ENCODE measurements at regions of chr12 and their contacts with region 1.

Region 1: GRCh38 chr12:85626001-85626781 is 210.0 kb downstream of the RASSF9 start:
- DNase-seq: peak; percentile 95
- H3K4me3 ChIP-seq: no peak overlapping the region
- H3K27ac ChIP-seq: peak overlapping the region; percentile 92
- H3K4me1 ChIP-seq: peaks cover 26% of the 10 kb centered on the region
- H3K27me3 ChIP-seq: no peaks in the 10 kb centered on the region
- CTCF ChIP-seq: no peak
- POLR2A ChIP-seq: peak; percentile 73

Region 2: GRCh38 chr12:83796527-83796926 is 1829.7 kb before region 1 on chr12:
- CTCF ChIA-PET with region 1: no interaction called
- POLR2A ChIA-PET with region 1: no interaction called
- dilution Hi-C with region 1: no loop called
- intact Hi-C with region 1: no loop called
- DNase-seq: no peak
- H3K4me3 ChIP-seq: no peak overlapping the region
- H3K27ac ChIP-seq: no peak overlapping the region
- H3K4me1 ChIP-seq: no peaks in the 10 kb centered on the region
- H3K27me3 ChIP-seq: no peaks in the 10 kb centered on the region
- CTCF ChIP-seq: no peak
- POLR2A ChIP-seq: no peak

Region 3: GRCh38 chr12:85237320-85237719 is 388.9 kb before region 1 on chr12:
- CTCF ChIA-PET with region 1: no interaction called
- POLR2A ChIA-PET with region 1: no interaction called
- dilution Hi-C with region 1: no loop called
- intact Hi-C with region 1: no loop called
- DNase-seq: no peak
- H3K4me3 ChIP-seq: no peak overlapping the region
- H3K27ac ChIP-seq: no peak overlapping the region
- H3K4me1 ChIP-seq: no peaks in the 10 kb centered on the region
- H3K27me3 ChIP-seq: no peaks in the 10 kb centered on the region
- CTCF ChIP-seq: no peak
- POLR2A ChIP-seq: no peak

Region 4: GRCh38 chr12:85588221-85588620 is 38.0 kb before region 1 on chr12:
- CTCF ChIA-PET with region 1: interaction called, 3 read pairs
- POLR2A ChIA-PET with region 1: no interaction called
- dilution Hi-C with region 1: no loop called
- intact Hi-C with region 1: loop called (anchors 2 kb)
- DNase-seq: peak; percentile 88
- H3K4me3 ChIP-seq: no peak overlapping the region
- H3K27ac ChIP-seq: no peak overlapping the region
- H3K4me1 ChIP-seq: no peaks in the 10 kb centered on the region
- H3K27me3 ChIP-seq: no peaks in the 10 kb centered on the region
- CTCF ChIP-seq: no peak
- POLR2A ChIP-seq: no peak

Region 5: GRCh38 chr12:85720308-85721033 is 94.3 kb after region 1 on chr12:
- CTCF ChIA-PET with region 1: no interaction called
- POLR2A ChIA-PET with region 1: no interaction called
- dilution Hi-C with region 1: no loop called
- intact Hi-C with region 1: loop called (anchors 1 kb)
- DNase-seq: peak; percentile 59
- H3K4me3 ChIP-seq: no peak overlapping the region
- H3K27ac ChIP-seq: peak overlapping the region; percentile 66
- H3K4me1 ChIP-seq: peaks cover 17% of the 10 kb centered on the region
- H3K27me3 ChIP-seq: no peaks in the 10 kb centered on the region
- CTCF ChIP-seq: no peak
- POLR2A ChIP-seq: no peak

Region 6: DNA sequence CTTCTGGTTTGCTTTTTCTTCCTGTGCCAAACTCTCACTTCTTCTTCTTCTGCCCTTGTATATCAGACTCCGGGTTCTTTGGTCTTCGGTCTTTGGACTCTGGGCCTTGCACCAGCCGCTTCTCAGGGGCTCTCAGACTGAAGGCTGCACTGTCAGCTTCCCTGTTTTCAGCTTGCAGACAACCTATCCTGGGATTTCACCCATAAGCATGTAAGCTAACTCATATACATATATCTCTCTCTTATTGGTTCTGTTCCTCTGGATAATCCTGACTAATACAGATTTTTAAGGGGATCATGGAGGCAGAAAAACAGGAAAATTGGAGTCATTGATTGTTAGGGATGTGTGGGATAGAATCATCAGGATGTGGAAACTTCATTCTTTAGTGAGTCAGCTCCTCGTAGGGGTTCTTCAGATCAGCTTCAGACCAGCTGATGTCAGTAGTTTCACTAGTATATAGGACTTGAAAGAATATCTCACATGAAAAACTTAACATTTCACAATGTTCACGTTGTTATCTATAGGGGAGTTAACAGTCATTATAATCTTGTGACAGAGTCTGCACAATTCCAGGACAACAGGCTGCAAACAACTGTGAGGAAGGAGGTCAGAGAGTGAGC is 107.1 kb after region 1 on chr12:
- CTCF ChIA-PET with region 1: no interaction called
- POLR2A ChIA-PET with region 1: no interaction called
- dilution Hi-C with region 1: no loop called
- intact Hi-C with region 1: no loop called
- DNase-seq: peak; percentile 84
- H3K4me3 ChIP-seq: no peak overlapping the region
- H3K27ac ChIP-seq: no peak overlapping the region
- H3K4me1 ChIP-seq: no peaks in the 10 kb centered on the region
- H3K27me3 ChIP-seq: no peaks in the 10 kb centered on the region
- CTCF ChIP-seq: no peak
- POLR2A ChIP-seq: no peak

Region 7: DNA sequence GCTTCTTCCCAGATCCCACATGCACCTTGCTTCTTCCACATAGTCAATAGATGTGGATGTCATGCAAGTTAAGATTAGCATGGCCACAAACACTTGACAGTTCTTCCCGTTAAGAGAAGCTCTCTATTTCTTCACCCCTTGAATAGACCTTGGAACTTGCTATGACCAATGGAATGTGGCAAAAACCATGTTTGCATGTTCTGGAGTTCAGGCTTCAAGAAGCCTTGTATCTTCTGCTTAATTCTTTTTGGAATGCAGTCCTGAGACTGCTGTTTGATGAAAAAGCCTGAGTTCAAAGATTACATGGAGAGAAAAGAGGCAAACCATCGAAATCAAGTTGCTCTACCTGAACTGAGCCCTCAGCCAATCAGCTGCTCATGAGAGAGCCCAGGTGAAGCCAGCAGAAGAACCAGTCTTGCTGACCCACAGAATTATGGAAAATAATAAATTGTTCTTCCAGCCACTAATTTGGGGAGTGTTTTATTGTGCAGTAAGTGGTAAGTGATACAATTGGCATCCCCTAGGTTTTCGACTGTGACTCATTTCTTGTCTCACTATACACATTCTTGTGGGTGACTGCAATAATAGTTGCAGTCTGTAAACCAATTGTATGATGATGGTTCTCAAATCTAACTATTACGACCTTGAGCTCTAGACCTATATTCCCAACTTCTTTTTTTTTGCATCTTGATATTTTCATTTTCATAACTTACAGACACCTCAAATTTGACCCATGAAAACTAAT is 197.4 kb after region 1 on chr12:
- CTCF ChIA-PET with region 1: interaction called, 5 read pairs
- POLR2A ChIA-PET with region 1: no interaction called
- dilution Hi-C with region 1: no loop called
- intact Hi-C with region 1: loop called (anchors 1 kb)
- DNase-seq: peak; percentile 58
- H3K4me3 ChIP-seq: no peak overlapping the region
- H3K27ac ChIP-seq: no peak overlapping the region
- H3K4me1 ChIP-seq: peaks cover 22% of the 10 kb centered on the region
- H3K27me3 ChIP-seq: no peaks in the 10 kb centered on the region
- CTCF ChIP-seq: no peak
- POLR2A ChIP-seq: no peak

Region 8: DNA sequence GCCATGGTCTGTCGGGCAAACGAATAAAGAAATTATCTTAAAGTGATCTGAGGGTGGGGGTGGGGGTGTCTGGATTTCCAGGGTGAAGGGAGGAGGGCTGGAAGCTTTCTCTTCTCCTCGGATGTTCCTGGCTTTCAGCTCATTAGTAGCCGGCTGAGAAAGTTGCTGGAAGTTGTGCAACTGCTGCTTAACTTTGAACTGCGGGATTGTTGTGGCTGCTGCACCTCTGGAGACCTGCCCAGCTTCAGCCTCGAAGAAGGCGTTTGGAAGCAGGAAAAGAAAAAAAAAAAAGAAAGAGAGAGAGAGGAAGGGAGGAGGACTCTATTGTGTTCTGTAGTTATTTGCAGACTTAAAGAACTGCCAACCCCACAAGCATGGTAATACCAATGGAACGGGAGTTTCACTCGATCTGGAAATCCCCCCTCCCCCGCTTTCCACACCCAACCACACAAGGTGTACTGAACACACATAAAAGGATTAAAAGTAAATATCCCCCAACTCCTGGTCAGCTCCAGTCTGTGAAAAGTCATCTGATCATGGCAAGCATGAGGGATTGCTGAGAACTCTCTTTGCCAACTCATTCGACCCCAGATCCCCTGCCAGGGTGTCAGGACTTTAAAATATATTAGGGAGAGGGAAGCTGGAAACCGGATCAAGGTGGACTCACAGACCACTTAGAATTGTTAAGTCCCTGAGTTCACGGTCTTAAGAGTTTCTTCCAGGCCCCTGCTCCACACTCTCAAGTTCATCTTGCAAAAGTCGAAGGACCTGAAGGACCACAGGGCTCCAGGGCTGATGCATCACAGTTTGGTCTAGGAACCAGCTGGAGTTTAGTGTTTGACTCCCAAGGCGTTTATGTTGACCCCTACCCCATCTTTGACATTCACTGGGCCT is 210.3 kb after region 1 on chr12 and contains the start of gene RASSF9:
- CTCF ChIA-PET with region 1: no interaction called
- POLR2A ChIA-PET with region 1: no interaction called
- dilution Hi-C with region 1: no loop called
- intact Hi-C with region 1: loop called (anchors 2 kb)
- DNase-seq: peak; percentile 84
- H3K4me3 ChIP-seq: peak within 1 kb of the TSS; percentile 5 to 89 (median 39)
- H3K27ac ChIP-seq: peak within 1 kb of the TSS; percentile 49
- H3K4me1 ChIP-seq: peaks cover 15% of the 10 kb centered on the region
- H3K27me3 ChIP-seq: no peaks in the 10 kb centered on the region
- CTCF ChIP-seq: no peak
- POLR2A ChIP-seq: no peak
- total RNA-seq, gene RASSF9: 2.3 and 3.6 TPM in 2 replicates